Mammary epithelial cell (primary cell): ENCODE measurements at regions of chr7 and their contacts with region 1.

Region 1: DNA sequence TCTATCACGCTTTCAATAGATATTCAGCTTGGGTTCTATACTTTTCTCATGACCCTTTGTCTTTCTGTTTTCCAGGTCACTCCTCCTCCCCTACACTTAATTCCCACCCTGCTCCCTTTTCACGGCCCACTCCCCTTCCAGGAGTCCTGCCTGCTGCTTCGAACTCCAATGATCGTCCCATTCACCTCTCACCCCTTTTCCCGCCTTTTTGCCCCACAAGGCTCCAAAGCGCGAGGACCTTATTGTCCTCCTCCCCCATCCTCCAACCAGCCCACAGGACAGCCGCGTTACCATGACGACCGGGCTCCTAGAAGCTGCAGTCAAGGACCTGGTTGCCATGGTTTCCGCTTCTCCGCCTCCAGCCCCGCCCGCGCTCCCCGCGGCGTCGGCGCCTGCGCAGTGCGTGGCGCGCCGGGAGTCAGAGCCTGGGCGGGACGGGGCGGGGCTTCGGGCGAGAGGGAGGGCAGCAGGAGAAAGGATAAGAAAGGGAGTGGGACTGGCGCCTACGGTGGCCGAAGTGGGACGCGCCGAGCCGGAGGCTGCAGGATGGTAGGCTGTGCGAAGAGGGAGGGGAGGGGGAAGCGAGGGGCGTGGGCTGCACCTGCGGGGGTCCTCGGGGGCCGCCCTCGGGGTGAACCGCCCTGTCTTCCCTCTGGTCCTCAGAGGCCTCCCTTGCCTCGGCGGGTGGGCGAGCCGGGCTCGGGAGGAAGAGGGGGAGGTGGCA is at the start of gene AP1S1:
- DNase-seq: peak; percentile 95
- H3K4me3 ChIP-seq: peak within 1 kb of the TSS; percentile 75 to 97 (median 91)
- H3K27ac ChIP-seq: peak within 1 kb of the TSS; percentile 66
- H3K4me1 ChIP-seq: peaks cover 7% of the 10 kb centered on the region
- H3K27me3 ChIP-seq: no peaks in the 10 kb centered on the region
- CTCF ChIP-seq: no peak
- total RNA-seq, gene AP1S1: 102 to 107 TPM

Region 2: DNA sequence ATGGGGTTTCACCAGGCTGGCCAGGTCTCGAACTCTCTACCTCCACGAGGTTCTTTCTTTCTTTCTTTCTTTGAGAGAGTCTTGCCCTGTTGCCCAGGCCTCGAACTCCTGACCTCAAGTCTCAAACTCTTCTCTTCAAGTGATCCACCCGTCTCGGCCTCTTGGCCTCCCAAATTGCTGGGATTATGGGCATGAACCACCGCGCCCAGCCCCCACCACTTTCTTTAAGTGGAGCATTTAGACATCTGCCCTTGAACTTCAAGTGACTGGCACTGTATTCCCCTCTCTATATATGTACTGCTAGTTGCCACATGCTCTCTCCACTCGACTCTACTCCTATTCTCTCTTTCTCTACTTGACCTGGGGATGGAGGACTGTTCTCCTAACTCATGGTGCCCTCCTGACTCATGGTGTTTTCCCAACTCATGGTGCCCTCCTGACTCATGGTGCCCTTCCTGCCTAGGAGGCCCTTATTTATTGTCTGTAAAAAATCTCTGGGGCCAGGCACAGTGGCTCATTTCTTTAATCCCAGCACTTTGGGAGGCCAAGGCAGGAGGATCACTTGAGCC is 239.2 kb before region 1 on chr7:
- CTCF ChIA-PET with region 1: no interaction called
- dilution Hi-C with region 1: no loop called
- in situ Hi-C with region 1: no loop called
- intact Hi-C with region 1: no loop called
- DNase-seq: peak; percentile 76
- H3K4me3 ChIP-seq: no peak overlapping the region
- H3K27ac ChIP-seq: no peak overlapping the region
- H3K4me1 ChIP-seq: no peaks in the 10 kb centered on the region
- H3K27me3 ChIP-seq: no peaks in the 10 kb centered on the region
- CTCF ChIP-seq: no peak

Region 3: GRCh38 chr7:101094416-101095375 is 59.4 kb before region 1 on chr7:
- CTCF ChIA-PET with region 1: no interaction called
- dilution Hi-C with region 1: no loop called
- in situ Hi-C with region 1: no loop called
- intact Hi-C with region 1: no loop called
- DNase-seq: no peak
- H3K4me3 ChIP-seq: no peak overlapping the region
- H3K27ac ChIP-seq: peak overlapping the region; percentile 51
- H3K4me1 ChIP-seq: peaks cover 22% of the 10 kb centered on the region
- H3K27me3 ChIP-seq: no peaks in the 10 kb centered on the region
- CTCF ChIP-seq: peak; percentile 46 to 62

Region 4: GRCh38 chr7:101165075-101165957 is 11.2 kb after region 1 on chr7 and contains the start of gene VGF:
- CTCF ChIA-PET with region 1: no interaction called
- dilution Hi-C with region 1: no loop called
- in situ Hi-C with region 1: no loop called
- intact Hi-C with region 1: loop called (anchors 1 kb)
- DNase-seq: peak; percentile 91
- H3K4me3 ChIP-seq: peak within 1 kb of the TSS; percentile 18 to 49 (median 47)
- H3K27ac ChIP-seq: no peak within 1 kb of the TSS
- H3K4me1 ChIP-seq: peaks cover 48% of the 10 kb centered on the region
- H3K27me3 ChIP-seq: peaks cover 7% of the 10 kb centered on the region
- CTCF ChIP-seq: no peak
- total RNA-seq, gene VGF: 0.54 TPM in 1 of 2 donors, not detected in the other

Region 5: GRCh38 chr7:101197991-101198390 is 43.9 kb after region 1 on chr7:
- CTCF ChIA-PET with region 1: interaction called, 27 read pairs
- dilution Hi-C with region 1: no loop called
- in situ Hi-C with region 1: no loop called
- intact Hi-C with region 1: no loop called
- DNase-seq: no peak
- H3K4me3 ChIP-seq: no peak overlapping the region
- H3K27ac ChIP-seq: no peak overlapping the region
- H3K4me1 ChIP-seq: peaks cover 8% of the 10 kb centered on the region
- H3K27me3 ChIP-seq: peaks cover 10% of the 10 kb centered on the region
- CTCF ChIP-seq: no peak

Region 6: DNA sequence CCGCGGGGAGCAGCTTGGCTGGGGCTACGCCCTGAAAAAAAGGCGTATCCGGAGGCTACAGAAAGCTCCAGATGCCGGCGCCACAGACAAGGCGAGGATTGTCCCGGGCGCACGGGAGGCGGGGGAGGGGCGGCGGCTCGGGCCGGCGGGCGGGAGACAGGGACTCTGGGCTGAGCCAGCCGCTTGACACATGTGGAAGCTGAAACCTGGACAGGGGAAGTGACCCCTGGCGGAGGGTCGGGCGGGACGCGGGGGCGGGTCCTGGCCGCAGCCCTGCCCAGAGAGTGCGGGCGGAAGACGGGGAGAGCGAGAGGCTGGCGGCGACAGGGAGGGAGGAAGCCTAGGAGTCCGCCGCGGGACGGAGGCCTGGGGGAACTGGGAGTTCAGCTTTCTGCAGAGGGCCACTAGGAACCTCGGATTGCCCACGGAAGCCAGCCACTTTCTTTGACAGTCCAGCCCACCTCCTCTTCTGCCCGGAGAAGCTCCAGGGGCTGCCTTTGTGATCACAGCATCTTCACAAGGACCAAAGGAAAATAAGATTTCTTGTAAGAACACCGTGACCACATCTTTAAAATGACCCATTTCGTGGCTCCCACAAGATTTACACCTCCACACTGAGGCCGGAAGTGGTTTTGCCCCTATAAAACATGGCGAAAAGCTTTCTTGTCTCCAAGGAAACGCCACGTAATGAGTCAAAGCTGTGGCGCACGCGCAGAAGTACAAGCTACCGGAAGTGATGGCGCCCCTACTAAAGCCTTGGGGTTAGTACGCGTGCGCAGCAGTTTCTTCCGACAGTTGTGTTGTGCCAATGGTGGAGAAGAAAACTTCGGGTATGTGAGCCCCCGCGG is 63.5 kb after region 1 on chr7 and contains the starts of genes PLOD3 and ZNHIT1:
- CTCF ChIA-PET with region 1: no interaction called
- dilution Hi-C with region 1: no loop called
- in situ Hi-C with region 1: no loop called
- intact Hi-C with region 1: no loop called
- DNase-seq: peak; percentile 96
- H3K4me3 ChIP-seq: peak within 1 kb of the TSS; percentile 76 to 89 (median 78)
- H3K27ac ChIP-seq: peak within 1 kb of the TSS; percentile 89
- H3K4me1 ChIP-seq: peaks cover 19% of the 10 kb centered on the region
- H3K27me3 ChIP-seq: no peaks in the 10 kb centered on the region
- CTCF ChIP-seq: peak in 1 of 2 donors; percentile 23
- total RNA-seq, gene PLOD3: 84.9 to 133 TPM
- total RNA-seq, gene ZNHIT1: 61.3 to 70.2 TPM

Region 7: GRCh38 chr7:101258243-101258731 is 104.2 kb after region 1 on chr7:
- CTCF ChIA-PET with region 1: no interaction called
- dilution Hi-C with region 1: loop called (anchors 5 kb)
- in situ Hi-C with region 1: no loop called
- intact Hi-C with region 1: no loop called
- DNase-seq: no peak
- H3K4me3 ChIP-seq: no peak overlapping the region
- H3K27ac ChIP-seq: no peak overlapping the region
- H3K4me1 ChIP-seq: no peaks in the 10 kb centered on the region
- H3K27me3 ChIP-seq: no peaks in the 10 kb centered on the region
- CTCF ChIP-seq: no peak

Region 8: DNA sequence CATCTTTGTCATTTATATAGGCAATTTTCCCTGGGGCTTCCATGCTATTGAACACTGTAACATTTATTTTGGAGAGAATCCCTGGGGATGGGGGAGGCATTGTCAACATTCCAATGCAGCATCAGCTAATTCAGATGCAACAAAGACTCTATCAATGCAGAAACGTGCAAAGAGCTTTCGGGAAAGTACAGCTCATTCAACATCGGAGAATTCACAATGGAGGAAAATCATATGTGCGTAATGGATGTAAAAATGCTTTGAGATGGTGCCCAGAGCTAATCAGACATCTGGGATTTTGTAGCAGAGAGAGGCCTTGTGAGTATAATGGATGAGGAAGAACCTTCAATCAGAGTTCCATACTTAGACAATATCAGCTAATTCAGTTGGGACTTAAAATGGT is 119.1 kb after region 1 on chr7:
- CTCF ChIA-PET with region 1: no interaction called
- dilution Hi-C with region 1: no loop called
- in situ Hi-C with region 1: loop called in 1 of 2 experiments (anchors 5 kb)
- intact Hi-C with region 1: no loop called
- DNase-seq: no peak
- H3K4me3 ChIP-seq: no peak overlapping the region
- H3K27ac ChIP-seq: no peak overlapping the region
- H3K4me1 ChIP-seq: no peaks in the 10 kb centered on the region
- H3K27me3 ChIP-seq: no peaks in the 10 kb centered on the region
- CTCF ChIP-seq: no peak